Psoas muscle (tissue), 8 donors: ENCODE measurements at regions of chr12 and their contacts with region 1.

Region 1: GRCh38 chr12:119444456-119445044 is 110.0 kb downstream of the CCDC60 start:
- DNase-seq: peak; percentile 21 to 59
- ATAC-seq: peak; percentile 48 to 82 (median 61)
- H3K4me3 ChIP-seq: no peak overlapping the region
- H3K27ac ChIP-seq: no peak overlapping the region
- H3K4me1 ChIP-seq: no peaks in the 10 kb centered on the region
- H3K27me3 ChIP-seq: peaks cover 0 to 2% (median 0%) of the 10 kb centered on the region in 3 donors
- CTCF ChIP-seq: peak; percentile 92

Region 2: GRCh38 chr12:119412811-119413794 is 31.4 kb before region 1 on chr12:
- intact Hi-C with region 1: no loop called
- DNase-seq: peak; percentile 47 to 56
- ATAC-seq: peak; percentile 61 to 83 (median 72)
- H3K4me3 ChIP-seq: no peak overlapping the region
- H3K27ac ChIP-seq: no peak overlapping the region
- H3K4me1 ChIP-seq: peaks cover 4% of the 10 kb centered on the region
- H3K27me3 ChIP-seq: no peaks in the 10 kb centered on the region
- CTCF ChIP-seq: peak; percentile 90

Region 3: DNA sequence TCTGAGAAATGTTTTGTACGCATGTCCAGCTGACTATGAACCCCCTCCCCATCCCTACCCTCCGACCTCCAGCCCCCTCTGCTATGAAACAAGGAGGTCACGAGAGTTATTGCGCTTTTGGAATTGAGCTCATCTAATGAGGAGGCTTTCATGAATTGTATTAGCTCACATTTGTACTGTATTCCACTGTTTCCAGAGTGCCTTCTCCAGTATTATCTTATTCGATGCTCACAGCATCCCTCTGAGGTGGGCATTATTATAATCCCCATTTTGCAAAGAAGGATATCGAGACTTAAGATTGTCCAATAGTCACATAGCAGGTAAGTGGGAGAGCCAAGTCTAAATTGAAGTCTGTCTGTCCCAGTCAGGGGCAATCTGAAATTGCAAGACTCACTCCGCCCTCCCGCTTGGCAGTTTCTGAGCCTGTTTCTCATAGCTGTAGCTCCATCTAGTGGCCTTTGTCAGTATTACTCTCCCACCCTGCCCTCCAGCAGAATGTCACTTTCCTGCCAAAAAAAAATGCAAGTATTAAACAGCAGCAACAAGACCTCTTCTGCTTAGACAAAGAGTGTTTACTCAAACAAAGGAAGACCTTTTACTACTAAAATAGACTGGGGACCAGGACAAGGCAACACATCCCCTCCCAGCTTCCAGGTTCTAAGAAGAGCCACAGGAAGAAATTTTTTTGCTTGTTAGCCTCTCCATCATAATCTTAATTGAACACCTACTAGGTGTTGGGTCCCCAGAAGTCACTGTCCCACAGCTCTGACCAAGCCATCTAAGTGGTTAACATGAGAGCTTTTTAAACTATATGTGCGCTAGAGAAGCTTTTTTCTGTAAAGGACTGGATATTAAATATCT is 100.4 kb after region 1 on chr12:
- intact Hi-C with region 1: loop called (anchors 2 to 5 kb)
- DNase-seq: peak; percentile 33 to 61
- ATAC-seq: peak; percentile 57 to 88 (median 72)
- H3K4me3 ChIP-seq: no peak overlapping the region
- H3K27ac ChIP-seq: no peak overlapping the region
- H3K4me1 ChIP-seq: no peaks in the 10 kb centered on the region
- H3K27me3 ChIP-seq: no peaks in the 10 kb centered on the region
- CTCF ChIP-seq: peak; percentile 84

Region 4: GRCh38 chr12:119649202-119649808 is 204.8 kb after region 1 on chr12:
- intact Hi-C with region 1: loop called in 1 of 2 experiments (anchors 5 kb)
- DNase-seq: no peak
- ATAC-seq: no peak
- H3K4me3 ChIP-seq: no peak overlapping the region
- H3K27ac ChIP-seq: no peak overlapping the region
- H3K4me1 ChIP-seq: peaks cover 6% of the 10 kb centered on the region
- H3K27me3 ChIP-seq: no peaks in the 10 kb centered on the region
- CTCF ChIP-seq: peak; percentile 80

Region 5: DNA sequence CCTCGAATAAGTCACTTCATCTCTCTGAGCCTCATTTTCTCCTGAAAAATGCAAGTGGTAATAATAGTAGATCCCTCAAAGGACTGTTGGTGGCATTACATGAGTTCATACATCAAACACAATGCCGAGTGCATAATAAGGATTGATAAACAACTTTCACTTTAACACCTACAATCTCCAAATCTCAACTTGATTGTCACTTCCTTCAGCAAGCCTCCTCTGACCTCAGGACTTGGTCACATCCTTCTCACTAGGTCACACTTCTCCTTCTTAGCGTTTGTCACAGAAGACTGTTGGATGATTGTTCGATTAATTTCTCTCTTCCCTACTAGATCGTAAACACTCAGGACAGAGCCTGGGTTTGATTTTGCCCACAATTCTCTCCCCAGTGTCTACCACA is 215.5 kb after region 1 on chr12:
- intact Hi-C with region 1: loop called (anchors 5 kb)
- DNase-seq: no peak
- ATAC-seq: no peak
- H3K4me3 ChIP-seq: no peak overlapping the region
- H3K27ac ChIP-seq: no peak overlapping the region
- H3K4me1 ChIP-seq: no peaks in the 10 kb centered on the region
- H3K27me3 ChIP-seq: no peaks in the 10 kb centered on the region
- CTCF ChIP-seq: no peak

Region 6: DNA sequence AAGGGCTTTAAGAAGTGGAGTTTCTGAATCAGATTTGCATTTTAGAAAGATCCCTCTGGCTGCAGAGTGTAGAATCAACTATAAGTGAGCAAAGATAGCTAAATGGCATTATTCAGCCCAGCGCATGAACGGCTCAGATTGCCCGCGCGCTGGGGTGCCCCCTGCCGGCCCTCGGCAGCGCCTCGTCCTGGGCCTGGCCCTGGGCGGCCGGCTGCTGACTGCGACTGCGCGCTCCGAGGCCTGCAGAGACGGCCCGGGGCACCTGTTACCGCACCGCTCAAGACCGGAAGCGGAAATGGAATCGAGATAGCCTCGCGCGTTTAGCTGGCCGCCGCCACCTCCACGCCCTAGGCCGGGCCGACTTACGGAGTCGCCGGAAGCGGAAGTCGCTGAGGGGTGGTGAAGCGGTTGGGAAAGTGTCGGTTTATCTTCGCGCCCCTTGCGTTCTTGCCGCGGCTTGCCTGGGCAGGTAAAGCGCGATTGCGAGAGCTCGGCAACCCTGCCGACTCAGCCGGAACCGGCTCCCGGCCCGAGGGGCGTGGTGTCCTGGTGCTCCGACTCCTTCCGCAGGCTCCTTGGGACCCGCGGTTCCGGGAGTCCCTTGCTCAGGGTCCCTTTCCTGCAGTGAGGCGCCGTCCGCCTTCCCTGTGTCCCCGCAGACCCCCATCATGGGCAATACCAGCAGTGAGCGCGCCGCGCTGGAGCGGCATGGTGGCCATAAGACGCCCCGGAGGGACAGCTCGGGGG is 223.2 kb after region 1 on chr12 and contains the start of gene PRKAB1:
- intact Hi-C with region 1: loop called (anchors 5 kb)
- DNase-seq: peak; percentile 97 to 98
- ATAC-seq: peak; percentile 98 to 100 (median 99)
- H3K4me3 ChIP-seq: peak within 1 kb of the TSS; percentile 94
- H3K27ac ChIP-seq: peak within 1 kb of the TSS; percentile 96
- H3K4me1 ChIP-seq: peaks cover 19% of the 10 kb centered on the region
- H3K27me3 ChIP-seq: no peaks in the 10 kb centered on the region
- CTCF ChIP-seq: peak; percentile 89
- total RNA-seq, gene PRKAB1: 9.0 to 16.7 (median 10.9) TPM